GM10248 (cell line): ENCODE measurements at regions of chr1 and their contacts with region 1.

Region 1: DNA sequence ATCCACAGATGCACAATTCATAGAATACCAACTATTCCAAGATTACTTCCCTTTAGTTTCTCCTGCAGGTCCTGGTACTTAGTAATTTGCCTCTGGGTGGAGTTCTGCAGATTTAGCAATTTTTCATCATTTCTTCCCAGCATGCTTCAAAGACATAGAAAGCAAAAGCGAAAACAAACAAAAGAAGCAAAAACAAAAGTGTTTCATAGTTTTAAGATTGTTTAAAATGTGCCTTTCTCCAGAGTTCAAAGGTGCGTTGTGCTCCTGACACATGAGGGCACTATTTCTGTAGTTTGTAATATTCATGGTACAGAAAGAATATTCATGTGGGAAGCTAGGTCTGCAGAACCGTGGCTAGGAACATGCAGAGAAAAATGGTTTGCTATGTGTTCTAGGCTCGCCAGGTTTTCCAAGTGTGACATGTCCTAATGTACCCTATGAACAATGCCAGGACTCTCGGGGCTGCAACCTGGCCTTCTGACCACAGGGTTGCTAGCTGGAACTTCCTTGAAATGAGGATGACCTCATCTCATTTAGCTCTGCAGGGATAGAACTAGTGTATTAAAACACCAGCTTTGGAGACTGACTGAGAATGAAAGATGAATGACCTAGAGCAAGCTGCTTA is 30.0 kb upstream of the RCSD1 start:
- DNase-seq: peak; percentile 65
- CTCF ChIP-seq: peak; percentile 74

Region 2: DNA sequence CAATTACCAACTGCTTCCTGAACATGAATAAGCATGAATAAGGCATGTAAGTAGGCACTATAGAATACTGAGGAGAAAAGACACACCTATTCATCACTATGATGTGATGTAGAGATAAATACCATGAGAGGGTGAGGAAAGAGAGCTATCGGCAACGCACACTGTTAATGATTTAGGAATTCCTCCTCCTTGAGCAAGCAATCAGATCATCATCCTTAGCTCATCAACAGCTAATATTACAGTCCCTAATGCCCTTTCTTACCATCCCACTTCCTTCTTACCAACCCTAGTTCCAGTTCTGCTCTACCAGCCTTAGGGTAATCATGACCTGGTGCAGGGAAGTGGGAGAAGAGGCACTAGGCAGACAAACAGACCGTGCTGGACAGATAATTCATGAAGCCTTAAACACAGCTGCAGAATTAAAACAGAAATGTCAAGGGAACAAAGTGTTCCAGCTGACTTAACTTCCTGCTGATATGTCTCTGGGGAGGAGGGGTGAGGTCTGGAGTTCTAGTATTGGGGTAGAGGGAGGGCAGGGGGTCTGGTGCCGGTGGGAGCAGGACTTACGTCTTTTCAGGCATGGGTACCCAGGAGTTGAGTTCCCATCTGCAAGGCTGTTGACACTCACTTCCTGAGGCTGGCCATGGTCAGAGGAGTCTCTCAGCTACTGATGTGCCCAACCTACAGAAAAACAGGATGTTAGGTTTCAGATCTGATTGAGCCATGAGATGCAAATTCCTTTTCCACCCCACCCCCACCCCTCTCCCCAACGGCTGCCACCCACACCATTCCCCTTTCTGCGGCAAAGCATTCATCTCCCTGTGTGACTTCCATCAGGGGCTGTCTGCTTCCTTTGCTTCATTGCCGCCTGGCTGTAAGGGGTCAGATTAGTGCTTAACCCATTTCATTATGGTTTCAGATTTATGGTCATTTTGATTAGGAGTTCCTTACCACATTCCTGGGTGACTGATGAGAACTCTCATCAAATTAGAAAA is 17.4 kb after region 1 on chr1:
- CTCF ChIA-PET with region 1: interaction called, 34 read pairs
- POLR2A ChIA-PET with region 1: no interaction called
- DNase-seq: no peak
- CTCF ChIP-seq: no peak

Region 3: GRCh38 chr1:167635156-167635648 is 35.1 kb after region 1 on chr1:
- CTCF ChIA-PET with region 1: interaction called, 42 read pairs
- POLR2A ChIA-PET with region 1: no interaction called
- DNase-seq: no peak
- CTCF ChIP-seq: no peak

Region 4: GRCh38 chr1:167669209-167670124 is 69.4 kb after region 1 on chr1:
- CTCF ChIA-PET with region 1: interaction called, 16 read pairs
- POLR2A ChIA-PET with region 1: no interaction called
- DNase-seq: no peak
- CTCF ChIP-seq: no peak

Region 5: GRCh38 chr1:167697667-167698141 is 97.6 kb after region 1 on chr1:
- CTCF ChIA-PET with region 1: interaction called, 14 read pairs
- POLR2A ChIA-PET with region 1: no interaction called
- DNase-seq: no peak
- CTCF ChIP-seq: no peak